HAP-1 (cell line): ENCODE measurements at regions of chr4 and their contacts with region 1.

Region 1: DNA sequence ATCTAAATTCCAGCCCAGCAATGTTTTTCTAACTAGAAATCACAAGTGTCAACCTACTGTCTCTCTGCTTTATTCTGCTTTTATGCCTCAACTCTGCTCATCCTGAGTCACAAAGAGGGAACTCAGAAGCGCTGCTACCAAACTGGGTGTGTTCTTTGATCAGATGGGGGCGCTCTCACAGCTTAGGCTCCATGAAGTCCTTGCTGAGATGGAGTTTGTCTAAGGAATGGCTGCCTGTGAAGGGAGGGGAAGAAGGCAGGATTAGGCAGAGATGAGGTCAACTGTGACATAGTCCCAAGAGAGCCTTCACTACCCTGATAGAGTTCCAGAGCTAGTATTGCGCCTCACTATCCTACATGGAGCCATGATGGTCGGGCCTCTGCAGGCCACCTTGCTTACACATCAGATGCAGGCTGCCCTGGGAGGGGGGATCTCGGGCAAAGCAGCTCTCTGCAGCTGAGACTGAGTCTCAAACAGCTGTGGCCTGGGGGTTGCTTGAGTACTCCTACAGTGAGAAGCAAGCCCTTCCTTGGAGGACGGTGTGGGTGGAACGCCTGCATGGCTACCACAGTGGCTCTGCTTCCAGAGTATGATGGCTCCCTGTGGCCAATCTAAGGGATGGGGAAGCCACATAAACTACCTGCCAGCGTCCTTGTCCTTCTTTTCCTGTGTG is 219.9 kb downstream of the CCNG2 start:
- DNase-seq: no peak
- H3K4me3 ChIP-seq: no peak overlapping the region
- H3K4me1 ChIP-seq: no peaks in the 10 kb centered on the region
- H3K27me3 ChIP-seq: peaks cover 9% of the 10 kb centered on the region; the same call in 1 of the 2 replicates

Region 2: DNA sequence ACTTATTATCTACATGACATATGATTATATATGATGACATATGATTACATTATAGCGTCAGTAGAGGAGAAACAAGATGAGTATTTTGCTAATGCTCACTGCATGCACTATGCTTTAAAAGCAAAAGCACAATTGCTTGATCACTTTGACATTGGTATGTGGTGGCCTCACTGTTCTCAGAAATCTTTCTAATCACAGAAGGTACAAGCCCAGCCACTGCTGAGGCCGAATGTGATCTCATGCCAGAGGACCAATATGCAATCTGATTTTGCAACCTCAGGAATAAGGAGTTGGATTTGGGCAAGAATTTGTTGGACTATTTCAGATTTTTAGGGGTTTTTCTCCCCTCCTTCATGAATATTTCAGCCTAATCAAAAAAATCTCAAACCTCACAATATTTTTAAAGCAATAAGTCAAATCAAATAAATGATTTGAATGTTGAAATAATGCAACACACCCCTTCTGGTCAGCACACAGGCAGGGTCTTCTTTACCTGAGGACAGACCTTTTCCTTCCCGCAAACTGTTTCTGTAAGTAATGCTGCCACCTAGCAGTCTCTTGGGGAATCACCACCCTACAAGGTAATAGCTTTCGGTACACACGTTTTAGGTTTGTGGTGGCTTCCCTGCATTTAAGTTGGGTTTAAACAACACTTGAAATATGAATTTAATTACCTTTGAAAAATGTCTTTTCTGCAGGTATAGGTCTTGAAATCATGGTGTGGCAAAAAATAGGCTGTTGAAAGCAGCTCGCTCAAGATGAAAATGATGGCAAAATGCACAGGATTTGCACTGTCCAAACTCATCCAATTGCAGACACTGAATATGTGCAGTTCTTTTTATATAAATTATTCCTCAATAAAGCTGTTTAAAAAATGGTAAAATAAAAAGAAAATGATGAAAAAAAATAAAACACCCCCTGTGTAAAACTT is 223.9 kb after region 1 on chr4:
- in situ Hi-C with region 1: loop called (anchors 10 kb)
- DNase-seq: peak; percentile 35 to 37
- H3K4me3 ChIP-seq: no peak overlapping the region
- H3K4me1 ChIP-seq: no peaks in the 10 kb centered on the region
- H3K27me3 ChIP-seq: peaks cover 20% of the 10 kb centered on the region